CD14-positive monocyte (primary cell): ENCODE measurements at regions of chr12 and their contacts with region 1.

Region 1: GRCh38 chr12:2853626-2854025 is 3.2 kb downstream of the TEX52 start:
- DNase-seq: peak; percentile 13 to 37 (median 20)
- H3K4me3 ChIP-seq: no peak overlapping the region
- H3K4me3 Mint-ChIP-seq: no peak overlapping the region
- H3K27ac ChIP-seq: no peak overlapping the region
- H3K27ac Mint-ChIP-seq: peak overlapping the region in 1 of 7 donors; percentile 55
- H3K4me1 ChIP-seq: no peaks in the 10 kb centered on the region
- H3K4me1 Mint-ChIP-seq: peaks cover 4% of the 10 kb centered on the region
- H3K27me3 ChIP-seq: no peaks in the 10 kb centered on the region
- H3K27me3 Mint-ChIP-seq: peaks cover 0 to 2% (median 1%) of the 10 kb centered on the region in 3 donors
- CTCF ChIP-seq: peak; percentile 72

Region 2: DNA sequence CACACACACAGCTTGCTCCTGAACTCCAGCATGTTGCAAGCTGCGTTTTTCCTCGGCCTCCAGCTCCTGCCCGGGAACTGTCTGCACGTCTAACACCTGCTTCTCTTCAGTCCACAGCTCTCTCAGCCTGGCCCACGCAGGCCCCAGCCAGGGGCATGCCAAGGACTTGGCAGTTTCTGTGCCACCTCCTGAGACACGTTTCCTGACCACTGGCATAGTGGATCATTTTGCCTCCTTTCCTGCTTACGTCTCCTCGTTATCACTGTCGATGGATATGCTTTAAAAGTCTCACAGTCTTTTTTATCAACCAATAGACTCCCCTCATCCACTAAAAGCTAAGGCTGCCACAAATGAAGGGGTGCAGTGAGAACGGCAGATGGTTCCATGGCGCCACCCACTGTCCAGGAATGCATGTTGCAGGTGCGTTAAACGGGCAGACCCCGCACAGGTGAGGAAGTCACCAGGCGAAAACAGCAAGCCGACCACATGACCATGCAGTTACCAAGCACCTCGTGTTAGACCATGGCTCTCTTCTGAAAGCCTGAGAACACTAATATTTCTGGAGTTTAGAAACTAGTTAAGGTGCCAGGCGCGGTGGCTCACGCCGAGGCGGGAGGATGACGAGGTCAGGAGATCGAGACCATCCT is 90.9 kb after region 1 on chr12:
- intact Hi-C with region 1: loop called (anchors 2 to 10 kb)
- DNase-seq: peak; percentile 4 to 14 (median 12)
- H3K4me3 ChIP-seq: no peak overlapping the region
- H3K4me3 Mint-ChIP-seq: no peak overlapping the region
- H3K27ac ChIP-seq: no peak overlapping the region
- H3K27ac Mint-ChIP-seq: no peak overlapping the region
- H3K4me1 ChIP-seq: no peaks in the 10 kb centered on the region
- H3K4me1 Mint-ChIP-seq: peaks cover 3% of the 10 kb centered on the region
- H3K27me3 ChIP-seq: no peaks in the 10 kb centered on the region
- H3K27me3 Mint-ChIP-seq: peaks cover 9 to 13% (median 11%) of the 10 kb centered on the region in 3 donors
- CTCF ChIP-seq: peak; percentile 70

Region 3: GRCh38 chr12:3034067-3034750 is 180.6 kb after region 1 on chr12:
- intact Hi-C with region 1: loop called in 1 of 2 experiments (anchors 10 kb)
- DNase-seq: no peak
- H3K4me3 ChIP-seq: no peak overlapping the region
- H3K4me3 Mint-ChIP-seq: no peak overlapping the region
- H3K27ac ChIP-seq: no peak overlapping the region
- H3K27ac Mint-ChIP-seq: no peak overlapping the region
- H3K4me1 ChIP-seq: no peaks in the 10 kb centered on the region
- H3K4me1 Mint-ChIP-seq: no peaks in the 10 kb centered on the region
- H3K27me3 ChIP-seq: no peaks in the 10 kb centered on the region
- H3K27me3 Mint-ChIP-seq: peaks cover 0 to 3% (median 0%) of the 10 kb centered on the region in 3 donors
- CTCF ChIP-seq: peak; percentile 42

Region 4: GRCh38 chr12:3041558-3042164 is 188.0 kb after region 1 on chr12:
- intact Hi-C with region 1: loop called (anchors 10 kb)
- DNase-seq: peak; percentile 42 to 50 (median 44)
- H3K4me3 ChIP-seq: no peak overlapping the region
- H3K4me3 Mint-ChIP-seq: no peak overlapping the region
- H3K27ac ChIP-seq: no peak overlapping the region
- H3K27ac Mint-ChIP-seq: no peak overlapping the region
- H3K4me1 ChIP-seq: no peaks in the 10 kb centered on the region
- H3K4me1 Mint-ChIP-seq: peaks cover 3% of the 10 kb centered on the region
- H3K27me3 ChIP-seq: no peaks in the 10 kb centered on the region
- H3K27me3 Mint-ChIP-seq: peaks cover 2% of the 10 kb centered on the region in 3 donors
- CTCF ChIP-seq: peak; percentile 67